Psoas muscle (tissue), 8 donors: ENCODE measurements at regions of chr16 and their contacts with region 1.

Region 1: DNA sequence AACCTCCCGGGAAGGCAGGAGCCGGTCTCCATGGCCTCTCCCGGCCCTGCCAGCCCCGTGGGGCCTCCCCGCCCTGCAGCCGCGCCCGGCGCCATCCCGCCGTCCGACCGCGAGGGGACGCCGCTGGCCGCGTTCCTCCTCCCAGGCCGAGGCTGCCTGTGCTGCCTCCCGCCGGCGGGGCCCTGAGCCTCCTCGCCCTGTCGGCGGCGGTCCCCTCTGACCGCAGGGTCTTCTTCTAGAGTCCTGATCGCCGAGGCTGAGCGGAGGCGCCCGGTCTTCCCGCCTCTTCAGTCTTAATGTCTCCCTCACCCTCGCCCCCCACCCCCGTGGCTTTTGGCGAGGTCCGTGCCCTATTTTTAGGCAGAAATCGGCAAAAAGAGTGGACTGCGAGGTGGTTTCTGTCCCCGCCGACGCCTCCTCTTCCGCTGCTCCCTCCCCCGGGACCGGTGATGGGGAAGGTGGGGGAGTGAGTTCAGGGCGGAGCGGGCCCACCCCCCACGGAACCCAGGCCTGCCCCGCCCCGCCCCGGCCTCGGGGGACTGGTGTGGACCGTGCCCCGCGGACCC is 794 bp upstream of the CPNE7 start:
- DNase-seq: peak in 1 of 2 donors; percentile 58
- ATAC-seq: peak in 3 of 4 donors; percentile 44 to 62 (median 59)
- H3K4me3 ChIP-seq: peak overlapping the region; percentile 47
- H3K27ac ChIP-seq: no peak overlapping the region
- H3K4me1 ChIP-seq: no peaks in the 10 kb centered on the region
- H3K27me3 ChIP-seq: peaks cover 0 to 67% (median 23%) of the 10 kb centered on the region in 3 donors
- CTCF ChIP-seq: peak; percentile 41

Region 2: DNA sequence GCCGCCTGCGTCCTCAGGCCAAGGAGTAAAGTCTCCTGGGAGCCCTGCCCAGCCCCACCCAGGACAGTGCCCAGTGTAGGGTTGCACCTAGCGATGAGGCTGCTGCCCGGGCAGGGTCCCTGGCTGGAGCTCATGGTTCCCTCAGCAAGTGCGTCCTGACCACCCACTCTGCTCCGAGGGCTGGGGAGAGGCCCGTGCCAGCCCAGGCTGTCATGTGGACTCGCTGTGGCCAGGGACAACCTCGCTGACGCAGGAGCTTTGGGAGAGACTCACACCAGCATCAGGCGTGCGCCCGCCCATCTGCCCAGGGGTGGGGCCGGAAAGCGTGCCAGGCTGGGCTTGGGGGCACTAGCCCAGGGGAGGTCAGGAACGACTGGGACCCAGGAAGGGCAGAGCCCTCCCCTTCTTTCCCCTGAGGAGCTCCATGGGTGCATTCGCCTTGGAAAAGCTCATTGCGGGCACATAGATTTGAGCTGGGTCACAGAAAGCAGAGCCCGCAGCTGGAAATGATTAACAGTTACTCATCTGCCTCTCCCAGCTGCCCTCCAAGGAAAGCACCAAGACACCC is 58.4 kb after region 1 on chr16:
- intact Hi-C with region 1: loop called in 1 of 2 experiments (anchors 10 kb)
- DNase-seq: no peak
- ATAC-seq: no peak
- H3K4me3 ChIP-seq: no peak overlapping the region
- H3K27ac ChIP-seq: no peak overlapping the region
- H3K4me1 ChIP-seq: no peaks in the 10 kb centered on the region
- H3K27me3 ChIP-seq: peaks cover 0 to 44% (median 3%) of the 10 kb centered on the region in 3 donors
- CTCF ChIP-seq: no peak